Activated naive CD4-positive, alpha-beta T cell treated with anti-CD3 and anti-CD28 coated beads for 36 hours (primary cell): ENCODE measurements at regions of chr2 and their contacts with region 1.

Region 1: DNA sequence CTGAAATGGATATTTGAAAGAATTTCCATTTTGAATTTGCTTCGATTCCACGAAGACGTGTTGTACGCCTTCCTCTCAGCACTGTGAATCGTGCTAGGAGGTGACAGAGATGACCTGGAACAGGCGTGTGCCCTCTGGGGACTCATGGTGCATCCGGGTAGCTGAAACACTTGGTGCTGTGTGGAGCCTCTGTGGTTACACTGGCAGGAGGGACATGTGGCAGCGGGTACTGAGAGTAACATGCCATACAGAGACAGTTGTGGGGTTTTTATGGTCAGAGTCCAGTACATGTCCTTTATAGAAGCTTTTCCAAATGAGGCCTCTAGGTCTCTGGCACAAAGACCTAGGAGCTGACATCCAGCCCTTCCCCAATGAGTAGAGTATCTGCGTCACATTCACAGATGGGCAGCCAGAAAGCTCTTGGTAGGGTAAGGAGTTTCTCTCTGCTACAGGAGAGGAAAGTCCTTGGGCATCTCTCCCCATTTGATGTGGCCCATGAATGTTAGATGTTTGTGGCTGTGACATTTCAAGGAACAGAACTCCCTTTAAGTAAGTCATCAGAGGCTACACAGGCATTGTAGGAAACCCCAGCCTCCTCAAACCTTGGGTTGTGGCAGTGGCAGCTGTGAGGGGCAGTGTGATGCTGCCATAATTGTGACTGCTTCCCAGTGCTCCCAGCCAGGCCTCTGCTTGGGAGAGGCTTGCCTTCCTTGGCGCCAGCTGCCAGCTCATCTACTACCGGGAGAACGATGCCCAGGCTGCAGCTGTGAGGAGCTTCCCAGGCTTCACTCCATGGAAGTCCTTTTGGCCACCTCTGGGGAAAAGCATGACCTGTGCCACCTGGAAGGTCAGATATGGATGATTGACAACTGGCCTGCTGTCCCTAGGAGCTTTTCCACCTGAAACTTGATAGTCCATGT is 80.6 kb downstream of the ACOXL start:
- DNase-seq: no peak
- H3K4me3 Mint-ChIP-seq: no peak overlapping the region
- H3K27ac Mint-ChIP-seq: no peak overlapping the region
- H3K4me1 Mint-ChIP-seq: peaks cover 4% of the 10 kb centered on the region
- H3K27me3 Mint-ChIP-seq: peaks cover 22% of the 10 kb centered on the region

Region 2: DNA sequence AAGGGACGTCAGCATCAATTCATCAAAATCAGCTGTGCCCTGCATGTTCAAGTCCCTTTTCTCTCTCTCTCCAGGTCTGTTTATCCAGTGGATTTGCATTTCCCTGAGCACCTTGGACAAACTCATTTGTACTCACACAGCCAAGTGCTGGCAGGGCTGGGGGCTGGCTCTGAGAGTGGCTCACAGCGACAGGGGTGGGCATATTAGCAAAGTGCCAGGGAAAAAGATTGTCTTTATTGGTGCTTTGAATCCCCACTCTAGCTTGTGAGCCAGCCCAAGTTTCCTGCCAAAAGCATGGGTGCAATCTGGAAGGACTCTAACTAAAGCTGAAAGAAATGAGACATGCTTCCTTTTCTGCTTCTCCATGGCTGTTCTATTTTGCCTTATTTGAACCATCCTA is 24.0 kb before region 1 on chr2:
- CTCF ChIA-PET with region 1: no interaction called
- intact Hi-C with region 1: no loop called
- DNase-seq: no peak
- H3K4me3 Mint-ChIP-seq: no peak overlapping the region
- H3K27ac Mint-ChIP-seq: no peak overlapping the region
- H3K4me1 Mint-ChIP-seq: no peaks in the 10 kb centered on the region
- H3K27me3 Mint-ChIP-seq: peaks cover 49% of the 10 kb centered on the region

Region 3: GRCh38 chr2:110827511-110827910 is 14.5 kb after region 1 on chr2:
- CTCF ChIA-PET with region 1: interaction called, 12 read pairs
- intact Hi-C with region 1: no loop called
- DNase-seq: no peak
- H3K4me3 Mint-ChIP-seq: no peak overlapping the region
- H3K27ac Mint-ChIP-seq: no peak overlapping the region
- H3K4me1 Mint-ChIP-seq: peaks cover 4% of the 10 kb centered on the region
- H3K27me3 Mint-ChIP-seq: peaks cover 12% of the 10 kb centered on the region

Region 4: DNA sequence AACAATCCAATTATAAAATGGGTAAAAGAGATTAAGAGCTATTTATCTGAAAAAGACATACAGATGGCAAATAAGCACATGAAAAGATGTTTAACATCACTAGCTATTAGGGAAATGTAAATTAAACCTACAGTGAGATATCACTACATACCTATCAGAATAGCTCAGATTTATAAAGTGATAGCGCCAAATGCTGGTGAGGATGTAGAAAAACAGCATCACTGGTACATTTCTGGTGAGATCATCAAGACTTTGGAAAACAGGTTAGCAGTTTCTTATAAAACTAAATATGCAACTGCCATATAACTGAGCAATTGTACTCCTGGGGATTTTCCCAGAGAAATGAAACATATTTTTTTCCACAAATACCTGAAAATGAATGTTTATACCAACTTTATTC is 19.8 kb after region 1 on chr2:
- CTCF ChIA-PET with region 1: interaction called, 12 read pairs
- intact Hi-C with region 1: no loop called
- DNase-seq: no peak
- H3K4me3 Mint-ChIP-seq: no peak overlapping the region
- H3K27ac Mint-ChIP-seq: no peak overlapping the region
- H3K4me1 Mint-ChIP-seq: peaks cover 25% of the 10 kb centered on the region
- H3K27me3 Mint-ChIP-seq: peaks cover 28% of the 10 kb centered on the region

Region 5: GRCh38 chr2:110843959-110844510 is 31.0 kb after region 1 on chr2:
- CTCF ChIA-PET with region 1: interaction called, 11 read pairs
- intact Hi-C with region 1: no loop called
- DNase-seq: peak; percentile 24
- H3K4me3 Mint-ChIP-seq: no peak overlapping the region
- H3K27ac Mint-ChIP-seq: no peak overlapping the region
- H3K4me1 Mint-ChIP-seq: peaks cover 55% of the 10 kb centered on the region
- H3K27me3 Mint-ChIP-seq: peaks cover 29% of the 10 kb centered on the region

Region 6: DNA sequence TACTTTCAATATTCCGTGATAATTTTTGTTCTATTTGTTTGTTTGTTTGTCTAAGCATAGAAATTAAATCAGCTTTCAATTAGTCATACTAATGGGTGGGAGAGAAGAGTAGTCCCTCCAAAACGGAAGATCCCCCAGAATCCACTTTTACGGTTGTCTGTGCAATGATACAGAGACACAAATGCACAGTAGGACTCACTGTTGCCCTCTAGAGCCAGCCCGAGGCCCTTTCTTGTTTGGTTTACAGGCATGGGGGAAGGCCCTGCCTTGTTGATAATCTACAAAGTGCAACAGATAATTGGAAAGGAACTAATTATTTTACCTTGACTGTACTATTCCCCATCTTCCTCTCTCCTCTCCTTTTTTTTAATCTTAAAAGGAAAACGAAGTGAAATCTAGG is 40.5 kb after region 1 on chr2:
- CTCF ChIA-PET with region 1: interaction called, 20 read pairs
- intact Hi-C with region 1: loop called (anchors 1 kb)
- DNase-seq: peak; percentile 78
- H3K4me3 Mint-ChIP-seq: no peak overlapping the region
- H3K27ac Mint-ChIP-seq: no peak overlapping the region
- H3K4me1 Mint-ChIP-seq: peaks cover 36% of the 10 kb centered on the region
- H3K27me3 Mint-ChIP-seq: peaks cover 44% of the 10 kb centered on the region